ENCODE measurements at regions of chr22 and their contacts with region 1.

Region 1: GRCh38 chr22:28800308-28801077 is at the start of gene XBP1:
- DNase-seq: peak; percentile 91
- ATAC-seq: peak; percentile 94
- H3K4me3 Mint-ChIP-seq: peak within 1 kb of the TSS; percentile 91
- H3K27ac Mint-ChIP-seq: peak within 1 kb of the TSS; percentile 91
- H3K4me1 Mint-ChIP-seq: peaks cover 48% of the 10 kb centered on the region
- H3K27me3 Mint-ChIP-seq: no peaks in the 10 kb centered on the region
- total RNA-seq, gene XBP1: 220 to 229 TPM

Region 2: DNA sequence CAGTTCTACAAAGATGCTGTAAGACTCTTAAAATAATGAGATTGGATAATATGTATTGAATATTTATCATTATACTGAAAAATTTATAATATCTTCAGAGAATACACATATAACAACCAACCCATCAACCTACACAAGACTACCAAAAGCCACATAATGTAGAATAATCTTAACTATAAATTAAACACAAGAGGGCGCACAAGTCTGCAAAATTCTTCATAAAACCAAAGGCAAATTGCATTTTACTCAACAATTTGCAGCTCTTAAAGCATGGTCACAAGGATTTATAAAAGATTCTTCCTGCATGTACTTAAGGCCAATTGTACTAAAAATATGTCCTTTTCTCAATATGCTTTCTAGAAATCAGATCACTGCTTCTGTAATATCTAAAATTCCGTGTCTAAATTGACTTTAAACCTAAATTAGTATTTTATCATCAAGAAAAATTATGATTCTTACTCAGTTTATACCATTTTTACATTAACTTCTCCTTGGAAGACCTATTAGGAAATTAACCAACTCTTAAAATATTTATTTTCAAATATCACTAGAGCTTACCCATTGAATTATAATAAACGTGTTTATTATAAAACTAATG is 199.8 kb before region 1 on chr22:
- CTCF ChIA-PET with region 1: interaction called, 10 read pairs
- POLR2A ChIA-PET with region 1: no interaction called
- DNase-seq: peak; percentile 42
- ATAC-seq: peak; percentile 49
- H3K4me3 Mint-ChIP-seq: no peak overlapping the region
- H3K27ac Mint-ChIP-seq: no peak overlapping the region
- H3K4me1 Mint-ChIP-seq: no peaks in the 10 kb centered on the region
- H3K27me3 Mint-ChIP-seq: peaks cover 31% of the 10 kb centered on the region

Region 3: GRCh38 chr22:28772633-28773460 is 27.6 kb before region 1 on chr22 and contains the start of gene CCDC117:
- CTCF ChIA-PET with region 1: interaction called, 18 read pairs
- POLR2A ChIA-PET with region 1: interaction called, 17 read pairs
- DNase-seq: peak; percentile 96
- ATAC-seq: peak; percentile 94
- H3K4me3 Mint-ChIP-seq: peak within 1 kb of the TSS; percentile 95
- H3K27ac Mint-ChIP-seq: peak within 1 kb of the TSS; percentile 94
- H3K4me1 Mint-ChIP-seq: peaks cover 29% of the 10 kb centered on the region
- H3K27me3 Mint-ChIP-seq: peaks cover 7% of the 10 kb centered on the region
- total RNA-seq, gene CCDC117: 36.7 to 40.0 TPM

Region 4: DNA sequence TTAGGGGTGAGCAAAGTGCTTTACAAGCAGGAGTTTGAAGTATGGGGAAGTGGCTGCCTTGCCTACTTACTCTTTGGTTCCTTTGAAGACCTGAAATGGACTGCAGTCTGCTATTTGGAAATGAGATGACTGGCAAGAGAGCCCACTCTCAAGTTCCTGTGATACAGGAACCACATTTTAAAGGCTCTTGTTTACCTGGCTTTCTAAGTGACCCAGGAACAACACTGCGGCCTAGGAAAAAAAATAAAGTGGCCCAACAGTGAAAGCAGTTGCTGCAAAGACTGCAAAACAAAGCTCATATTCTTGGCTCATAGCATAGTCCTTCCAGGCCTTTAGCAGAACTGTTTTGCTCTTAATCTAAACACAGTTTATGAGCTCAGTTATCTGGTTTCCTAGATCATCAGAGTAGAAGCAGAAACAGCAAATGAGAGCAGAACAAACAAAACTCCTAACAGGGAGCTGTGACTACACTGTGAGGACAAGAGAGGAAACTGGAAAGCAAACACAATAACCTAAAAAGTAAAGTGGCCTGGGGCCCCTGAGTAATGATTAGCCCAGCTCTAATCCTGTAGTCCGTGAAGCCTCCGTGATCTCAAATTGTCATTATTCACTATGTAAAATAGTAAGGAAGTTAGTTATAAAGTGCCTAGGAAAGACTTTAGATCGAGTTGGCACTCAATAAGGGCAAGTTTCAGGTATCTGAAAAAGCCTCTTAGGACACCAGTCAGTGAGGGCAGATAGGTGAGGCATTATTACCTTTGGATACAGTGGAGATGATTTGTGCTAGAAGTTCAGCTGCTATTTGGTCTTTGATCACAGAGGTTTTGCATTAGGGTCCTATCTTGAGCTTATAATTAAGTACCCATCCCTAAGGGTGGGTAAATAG is 16.5 kb before region 1 on chr22:
- CTCF ChIA-PET with region 1: interaction called, 28 read pairs
- POLR2A ChIA-PET with region 1: interaction called, 17 read pairs
- DNase-seq: no peak
- ATAC-seq: no peak
- H3K4me3 Mint-ChIP-seq: no peak overlapping the region
- H3K27ac Mint-ChIP-seq: peak overlapping the region; percentile 6
- H3K4me1 Mint-ChIP-seq: peaks cover 19% of the 10 kb centered on the region
- H3K27me3 Mint-ChIP-seq: no peaks in the 10 kb centered on the region

Region 5: DNA sequence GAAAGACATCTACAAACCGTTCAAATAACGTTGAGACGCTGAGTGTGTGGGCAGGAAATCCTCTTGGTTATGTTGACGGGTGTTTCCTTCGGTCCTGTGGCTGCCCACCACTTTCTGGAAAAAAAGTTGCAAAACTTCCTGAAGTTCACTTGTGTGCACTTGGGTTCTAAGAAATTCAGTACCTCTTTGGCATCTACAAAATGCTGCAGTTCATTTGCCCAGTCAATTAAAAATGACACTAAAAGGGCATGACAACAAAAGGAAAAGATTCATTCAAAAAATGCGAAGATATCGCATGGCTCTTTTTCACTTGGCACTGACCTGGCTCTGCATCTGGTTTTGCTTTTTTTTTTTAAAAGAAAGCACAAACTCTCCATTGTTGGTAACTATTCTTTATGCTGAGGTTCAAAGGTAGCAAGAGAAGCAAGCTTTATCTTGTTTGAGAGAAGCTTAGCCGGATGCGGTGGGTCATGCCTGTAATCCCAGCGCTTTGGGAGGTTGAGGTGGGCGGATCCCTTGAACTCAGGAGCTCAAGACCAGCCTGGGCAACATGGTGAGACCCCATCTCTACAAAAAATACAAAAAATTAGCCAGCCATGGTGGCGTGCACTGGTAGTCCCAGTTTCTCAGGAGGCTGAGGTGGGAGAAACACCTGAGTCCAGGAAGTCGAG is 10.5 kb after region 1 on chr22:
- CTCF ChIA-PET with region 1: interaction called, 98 read pairs
- POLR2A ChIA-PET with region 1: interaction called, 138 read pairs
- DNase-seq: peak; percentile 75
- ATAC-seq: peak; percentile 52
- H3K4me3 Mint-ChIP-seq: peak overlapping the region; percentile 74
- H3K27ac Mint-ChIP-seq: peak overlapping the region; percentile 96
- H3K4me1 Mint-ChIP-seq: peaks cover 82% of the 10 kb centered on the region
- H3K27me3 Mint-ChIP-seq: no peaks in the 10 kb centered on the region

Region 6: GRCh38 chr22:28817919-28818909 is 17.7 kb after region 1 on chr22:
- CTCF ChIA-PET with region 1: interaction called, 98 read pairs
- POLR2A ChIA-PET with region 1: interaction called, 138 read pairs
- DNase-seq: peak; percentile 39
- ATAC-seq: no peak
- H3K4me3 Mint-ChIP-seq: no peak overlapping the region
- H3K27ac Mint-ChIP-seq: peak overlapping the region; percentile 81
- H3K4me1 Mint-ChIP-seq: peaks cover 82% of the 10 kb centered on the region
- H3K27me3 Mint-ChIP-seq: no peaks in the 10 kb centered on the region

Region 7: GRCh38 chr22:28829358-28830181 is 29.1 kb after region 1 on chr22:
- CTCF ChIA-PET with region 1: interaction called, 53 read pairs
- POLR2A ChIA-PET with region 1: interaction called, 32 read pairs
- DNase-seq: peak; percentile 86
- ATAC-seq: peak; percentile 80
- H3K4me3 Mint-ChIP-seq: no peak overlapping the region
- H3K27ac Mint-ChIP-seq: peak overlapping the region; percentile 55
- H3K4me1 Mint-ChIP-seq: peaks cover 48% of the 10 kb centered on the region
- H3K27me3 Mint-ChIP-seq: no peaks in the 10 kb centered on the region

Measured in activated CD8-positive, alpha-beta T cell treated with anti-CD3 and anti-CD28 coated beads, Interleukin-2, amount 10 ng/mL, durations not matched to agents 7 days and 5 days (primary cell).